ENCODE measurements at regions of chr4 and their contacts with region 1.

Region 1: GRCh38 chr4:153207567-153207966 is 3.3 kb downstream of the TRIM2 start:
- DNase-seq: peak; percentile 51
- H3K4me3 ChIP-seq: no peak overlapping the region
- H3K27ac ChIP-seq: no peak overlapping the region
- H3K4me1 ChIP-seq: peaks cover 0 to 5% of the 10 kb centered on the region in 2 experiments; a peak in 1 of 4 replicates
- H3K27me3 ChIP-seq: no peaks in the 10 kb centered on the region
- CTCF ChIP-seq: peak; percentile 62
- EP300 ChIP-seq: no peak
- RAD21 ChIP-seq: peak; percentile 60

Region 2: GRCh38 chr4:153191795-153192363 is 15.7 kb before region 1 on chr4:
- CTCF ChIA-PET with region 1: interaction called, 16 read pairs
- POLR2A ChIA-PET with region 1: no interaction called
- DNase-seq: no peak
- H3K4me3 ChIP-seq: no peak overlapping the region
- H3K27ac ChIP-seq: 0 out of 4 replicates have a peak overlapping the region, but pooled peaks of 1 of the 2 experiments have one; percentile 13
- H3K4me1 ChIP-seq: peaks cover 0 to 8% of the 10 kb centered on the region in 2 experiments; a peak in 2 of 4 replicates
- H3K27me3 ChIP-seq: no peaks in the 10 kb centered on the region
- CTCF ChIP-seq: no peak
- EP300 ChIP-seq: no peak
- RAD21 ChIP-seq: no peak

Region 3: GRCh38 chr4:153221783-153222706 is 14.5 kb after region 1 on chr4:
- CTCF ChIA-PET with region 1: interaction called, 16 read pairs
- POLR2A ChIA-PET with region 1: interaction called, 6 read pairs
- DNase-seq: peak; percentile 84
- H3K4me3 ChIP-seq: peak overlapping the region; percentile 81 to 84
- H3K27ac ChIP-seq: peak overlapping the region; percentile 97 to 98
- H3K4me1 ChIP-seq: peaks cover 0 to 10% of the 10 kb centered on the region in 2 experiments; a peak in 2 of 4 replicates
- H3K27me3 ChIP-seq: no peaks in the 10 kb centered on the region
- CTCF ChIP-seq: no peak
- EP300 ChIP-seq: peak; percentile 6 to 16; a peak in 1 of 4 replicates
- RAD21 ChIP-seq: peak; percentile 2; the same call in 1 of the 2 replicates